ENCODE measurements at regions of chr10 and their contacts with region 1.

Region 1: DNA sequence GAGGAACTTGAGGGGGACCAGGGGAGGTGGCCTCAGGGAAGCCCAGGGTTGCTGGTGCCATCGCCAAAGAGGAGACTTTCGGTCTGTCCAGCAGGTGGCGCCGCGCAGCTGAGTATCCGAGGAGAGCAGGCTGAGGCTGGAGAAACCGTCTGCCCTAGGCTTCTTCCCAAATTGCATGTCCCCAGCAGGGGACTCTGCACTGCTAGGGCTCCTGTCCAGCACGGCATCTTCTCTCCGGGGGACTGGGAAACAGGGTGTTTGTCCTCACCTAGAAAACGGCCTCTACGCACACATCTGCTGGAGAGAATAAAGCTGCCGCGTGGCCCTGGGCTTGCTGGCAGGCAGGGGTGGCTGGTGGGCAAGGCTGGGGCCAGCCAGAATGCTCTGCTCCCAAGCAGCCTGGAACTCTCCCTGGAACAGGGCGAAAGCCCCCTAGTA is 161.9 kb downstream of the SH2D4B start:
- DNase-seq: peak; percentile 80
- ATAC-seq: peak; percentile 88
- H3K4me3 Mint-ChIP-seq: no peak overlapping the region
- H3K27ac Mint-ChIP-seq: no peak overlapping the region
- H3K4me1 Mint-ChIP-seq: no peaks in the 10 kb centered on the region
- H3K27me3 Mint-ChIP-seq: no peaks in the 10 kb centered on the region

Region 2: GRCh38 chr10:80265740-80266512 is 433.7 kb before region 1 on chr10:
- CTCF ChIA-PET with region 1: no interaction called
- POLR2A ChIA-PET with region 1: no interaction called
- DNase-seq: no peak
- ATAC-seq: no peak
- H3K4me3 Mint-ChIP-seq: no peak overlapping the region
- H3K27ac Mint-ChIP-seq: no peak overlapping the region
- H3K4me1 Mint-ChIP-seq: no peaks in the 10 kb centered on the region
- H3K27me3 Mint-ChIP-seq: peaks cover 4% of the 10 kb centered on the region

Region 3: DNA sequence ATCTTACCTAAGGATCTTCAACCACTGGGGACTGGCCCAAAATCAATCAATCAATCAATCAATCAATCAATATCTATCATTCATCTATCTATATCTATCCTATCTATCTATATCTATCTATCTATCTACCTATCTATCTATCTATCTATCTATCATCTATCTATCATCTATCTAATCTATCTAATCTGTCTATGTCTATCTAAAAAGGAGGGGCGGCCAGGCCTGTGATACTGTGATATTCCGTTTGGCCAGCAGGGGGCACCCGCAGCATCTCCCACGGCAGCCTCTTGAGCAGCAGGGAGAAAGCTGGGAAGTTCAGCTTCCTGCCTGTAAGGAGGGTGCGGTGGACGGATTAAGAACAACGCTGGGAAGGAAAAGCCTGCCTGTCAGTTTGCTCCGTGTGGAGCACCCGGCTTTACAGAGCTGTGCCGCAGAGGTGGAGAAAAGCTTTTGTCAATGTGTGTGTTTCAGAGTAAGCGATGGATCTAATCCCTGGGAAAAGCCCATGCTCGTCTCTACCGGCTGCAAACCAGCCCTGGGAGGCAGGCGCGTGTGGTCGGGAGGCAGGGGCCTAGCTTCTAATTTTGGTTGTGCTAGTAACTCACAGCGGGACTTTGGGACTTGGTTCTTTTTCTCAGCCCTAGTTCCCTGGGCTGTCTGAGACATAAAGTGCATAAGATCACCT is 36.9 kb before region 1 on chr10:
- CTCF ChIA-PET with region 1: interaction called, 10 read pairs
- POLR2A ChIA-PET with region 1: no interaction called
- DNase-seq: peak; percentile 77
- ATAC-seq: peak; percentile 73
- H3K4me3 Mint-ChIP-seq: no peak overlapping the region
- H3K27ac Mint-ChIP-seq: no peak overlapping the region
- H3K4me1 Mint-ChIP-seq: no peaks in the 10 kb centered on the region
- H3K27me3 Mint-ChIP-seq: peaks cover 2% of the 10 kb centered on the region

Region 4: GRCh38 chr10:80924063-80924952 is 224.7 kb after region 1 on chr10:
- CTCF ChIA-PET with region 1: interaction called, 21 read pairs
- POLR2A ChIA-PET with region 1: no interaction called
- DNase-seq: peak; percentile 31
- ATAC-seq: no peak
- H3K4me3 Mint-ChIP-seq: no peak overlapping the region
- H3K27ac Mint-ChIP-seq: no peak overlapping the region
- H3K4me1 Mint-ChIP-seq: no peaks in the 10 kb centered on the region
- H3K27me3 Mint-ChIP-seq: peaks cover 3% of the 10 kb centered on the region

Region 5: DNA sequence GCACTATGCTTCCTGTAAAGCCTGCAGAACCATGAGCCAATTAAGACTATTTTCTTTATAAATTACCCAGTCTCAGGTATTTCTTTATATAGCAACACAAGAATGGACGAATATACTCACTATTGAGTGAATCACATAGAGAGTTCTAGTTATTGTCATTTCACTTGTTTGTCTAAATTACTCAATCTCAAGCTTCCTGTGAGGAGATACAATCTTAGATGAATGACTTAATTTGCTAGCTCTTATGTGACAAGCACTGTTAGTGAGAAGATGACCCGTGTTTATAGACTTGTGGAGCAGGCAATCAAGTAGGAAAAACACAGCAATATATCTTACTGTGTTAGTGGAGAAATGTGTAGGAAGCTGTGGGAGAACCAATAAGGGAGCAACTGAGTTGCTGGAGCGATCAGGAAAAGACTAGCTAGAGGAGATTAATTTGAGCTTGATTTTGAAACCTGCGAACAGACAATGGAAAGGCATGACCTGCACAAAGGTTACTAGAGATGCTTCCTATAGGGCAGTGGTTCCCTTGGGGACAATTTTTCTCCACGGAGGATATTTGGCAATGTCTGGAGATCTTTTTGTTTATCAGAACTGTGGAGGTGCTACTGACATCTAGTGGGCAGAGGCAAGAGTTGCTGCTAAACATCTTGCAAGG is 319.2 kb after region 1 on chr10:
- CTCF ChIA-PET with region 1: interaction called, 18 read pairs
- POLR2A ChIA-PET with region 1: no interaction called
- DNase-seq: peak; percentile 33
- ATAC-seq: peak; percentile 53
- H3K4me3 Mint-ChIP-seq: no peak overlapping the region
- H3K27ac Mint-ChIP-seq: no peak overlapping the region
- H3K4me1 Mint-ChIP-seq: no peaks in the 10 kb centered on the region
- H3K27me3 Mint-ChIP-seq: no peaks in the 10 kb centered on the region

Measured in activated CD8-positive, alpha-beta T cell treated with anti-CD3 and anti-CD28 coated beads, Interleukin-2, amount 10 ng/mL, durations not matched to agents 7 days and 5 days (primary cell).